ENCODE measurements at regions of chr16 and their contacts with region 1.

Region 1: GRCh38 chr16:48687421-48688038 is 77.5 kb upstream of the N4BP1 start:
- DNase-seq: peak; percentile 90
- H3K4me3 ChIP-seq: no peak overlapping the region
- H3K27ac ChIP-seq: no peak overlapping the region
- H3K4me1 ChIP-seq: peaks cover 0 to 5% (median 2%) of the 10 kb centered on the region in 4 donors
- H3K27me3 ChIP-seq: peaks cover 0 to 8% (median 0%) of the 10 kb centered on the region in 4 donors
- CTCF ChIP-seq: peak; percentile 60 to 73 (median 61)
- EP300 ChIP-seq: no peak
- POLR2A ChIP-seq: no peak

Region 2: GRCh38 chr16:49350265-49351095 is 663.0 kb after region 1 on chr16:
- intact Hi-C with region 1: loop called (anchors 2 kb)
- DNase-seq: no peak
- H3K4me3 ChIP-seq: no peak overlapping the region
- H3K27ac ChIP-seq: no peak overlapping the region
- H3K4me1 ChIP-seq: no peaks in the 10 kb centered on the region
- H3K27me3 ChIP-seq: peaks cover 0 to 77% (median 3%) of the 10 kb centered on the region in 4 donors
- CTCF ChIP-seq: peak; percentile 57 to 81 (median 72)
- EP300 ChIP-seq: no peak
- POLR2A ChIP-seq: no peak